Left ventricle myocardium inferior (tissue), 1 donor: ENCODE measurements at regions of chr7 and their contacts with region 1.

Region 1: DNA sequence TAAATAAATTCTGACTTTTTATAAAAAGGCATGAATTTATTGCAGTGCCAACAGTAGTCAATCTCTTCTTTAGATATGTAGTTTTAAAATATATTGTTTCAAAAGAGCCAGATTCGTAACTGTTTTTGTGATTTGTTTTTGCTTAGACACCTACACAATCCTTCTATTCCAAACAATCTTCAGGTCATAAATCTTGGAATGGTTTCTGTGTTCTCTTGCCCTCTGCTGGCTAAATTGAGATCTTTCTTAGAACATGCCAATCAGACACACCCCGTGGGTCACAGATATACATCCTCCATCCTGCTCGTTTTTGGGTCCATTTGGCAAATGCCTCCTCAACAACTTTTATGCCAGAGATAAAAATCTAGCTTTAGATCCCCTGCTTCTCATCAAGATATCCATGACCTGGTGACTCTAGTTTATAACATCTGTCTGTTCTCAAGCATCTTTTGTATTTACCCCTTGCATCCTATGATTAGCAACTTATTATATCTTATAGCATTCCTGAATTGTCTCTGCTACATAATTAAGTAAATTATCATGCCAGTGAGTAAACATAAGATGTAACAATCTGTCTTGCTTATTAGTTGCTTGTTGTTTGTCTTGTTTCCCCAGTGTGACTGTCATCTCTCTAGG is 35.3 kb upstream of the IFRD1 start:
- DNase-seq: no peak
- H3K4me3 ChIP-seq: no peak overlapping the region
- H3K27ac ChIP-seq: no peak overlapping the region
- H3K4me1 ChIP-seq: no peaks in the 10 kb centered on the region
- H3K27me3 ChIP-seq: no peaks in the 10 kb centered on the region
- CTCF ChIP-seq: peak; percentile 72

Region 2: GRCh38 chr7:111752022-111752582 is 662.9 kb before region 1 on chr7:
- intact Hi-C with region 1: loop called (anchors 10 kb)
- DNase-seq: peak; percentile 35
- H3K4me3 ChIP-seq: no peak overlapping the region
- H3K27ac ChIP-seq: no peak overlapping the region
- H3K4me1 ChIP-seq: no peaks in the 10 kb centered on the region
- H3K27me3 ChIP-seq: no peaks in the 10 kb centered on the region
- CTCF ChIP-seq: peak; percentile 84

Region 3: GRCh38 chr7:112327566-112327965 is 87.4 kb before region 1 on chr7:
- intact Hi-C with region 1: no loop called
- DNase-seq: no peak
- H3K4me3 ChIP-seq: no peak overlapping the region
- H3K27ac ChIP-seq: no peak overlapping the region
- H3K4me1 ChIP-seq: no peaks in the 10 kb centered on the region
- H3K27me3 ChIP-seq: no peaks in the 10 kb centered on the region
- CTCF ChIP-seq: no peak

Region 4: DNA sequence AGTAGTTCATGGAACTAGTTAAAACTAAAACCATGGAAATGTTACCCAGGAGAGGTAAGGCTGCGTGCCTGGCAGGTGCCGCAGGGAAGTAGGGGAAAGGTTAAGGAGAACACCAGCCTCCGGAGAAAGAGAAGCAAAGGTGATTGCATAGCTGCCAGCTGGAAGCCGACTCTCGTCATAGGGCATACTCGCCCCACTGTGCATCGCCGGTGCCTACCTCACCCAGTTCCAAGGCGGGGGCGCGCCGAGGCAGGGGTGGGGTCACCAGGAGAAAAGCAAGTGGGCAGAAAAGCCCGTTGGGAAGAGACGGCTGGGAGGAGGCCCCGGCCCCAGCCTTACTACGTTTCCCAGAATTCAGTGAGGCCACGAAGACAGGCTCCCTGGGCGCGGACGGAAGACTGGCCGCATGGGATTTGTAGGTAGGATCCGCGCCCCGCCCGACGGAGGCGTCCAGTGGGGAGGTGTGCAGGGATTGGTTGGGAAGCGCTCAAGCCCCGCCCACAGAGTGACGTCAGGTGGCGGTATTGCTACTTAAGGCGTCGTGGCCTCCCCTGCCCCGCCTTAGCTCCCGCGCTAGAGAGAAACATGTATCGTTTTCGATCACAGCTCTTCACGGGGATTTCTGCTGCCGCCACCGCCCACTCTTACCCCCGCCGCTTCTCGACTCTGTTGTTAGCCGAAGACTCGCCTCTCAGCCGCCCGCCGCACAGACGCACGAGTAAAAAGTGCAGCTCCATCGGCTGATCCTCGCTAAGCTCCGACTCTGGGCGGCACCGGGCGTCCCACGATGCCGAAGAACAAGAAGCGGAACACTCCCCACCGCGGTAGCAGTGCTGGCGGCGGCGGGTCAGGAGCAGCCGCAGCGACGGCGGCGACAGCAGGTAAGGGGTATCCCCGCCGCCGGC is 35.2 kb after region 1 on chr7 and contains the start of gene IFRD1:
- intact Hi-C with region 1: loop called (anchors 5 kb)
- DNase-seq: peak; percentile 99
- H3K4me3 ChIP-seq: peak within 1 kb of the TSS; percentile 94
- H3K27ac ChIP-seq: peak within 1 kb of the TSS; percentile 98
- H3K4me1 ChIP-seq: peaks cover 57% of the 10 kb centered on the region
- H3K27me3 ChIP-seq: no peaks in the 10 kb centered on the region
- CTCF ChIP-seq: no peak
- total RNA-seq, gene IFRD1: 24.6 TPM